ENCODE measurements at regions of chr2 and their contacts with region 1.

Region 1: DNA sequence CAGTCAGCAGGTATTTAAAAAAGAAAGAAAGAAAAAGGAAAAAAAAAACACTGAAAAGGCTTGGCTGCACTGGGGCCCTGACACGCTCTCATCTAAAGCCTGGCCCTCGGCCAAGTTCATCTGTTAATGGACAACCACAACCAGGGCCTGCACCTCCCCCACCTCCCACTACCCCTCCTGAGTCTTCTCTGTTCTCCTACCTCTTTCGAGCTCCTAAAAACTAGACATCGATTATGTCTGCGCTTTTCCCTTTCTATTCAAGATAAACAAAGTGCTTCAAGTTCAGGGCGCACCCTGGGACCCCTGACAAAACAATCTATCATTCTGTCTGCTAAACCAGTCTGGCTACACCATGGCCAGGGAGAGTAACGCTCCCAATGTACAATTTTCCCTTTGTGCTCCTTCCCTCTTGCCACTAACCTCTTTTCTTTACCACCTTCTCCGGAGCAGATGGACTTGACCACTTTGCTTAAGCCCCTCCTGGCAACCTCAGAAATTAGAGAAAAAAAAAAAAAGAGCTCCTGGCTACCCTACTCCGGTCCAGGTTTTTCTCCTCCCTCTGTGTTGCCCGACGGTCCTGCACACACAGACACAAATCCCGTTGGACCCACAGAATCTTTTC is 22.7 kb downstream of the BCL11A start:
- DNase-seq: peak; percentile 69 to 84 (median 84)
- H3K4me3 ChIP-seq: peak overlapping the region in 5 of 7 experiments; percentile 15 to 69 (median 33)
- H3K27ac ChIP-seq: peak overlapping the region in 1 of 2 experiments; percentile 56
- H3K4me1 ChIP-seq: peaks cover 30 to 96% (median 78%) of the 10 kb centered on the region in 4 experiments
- H3K27me3 ChIP-seq: no peaks in the 10 kb centered on the region

Region 2: DNA sequence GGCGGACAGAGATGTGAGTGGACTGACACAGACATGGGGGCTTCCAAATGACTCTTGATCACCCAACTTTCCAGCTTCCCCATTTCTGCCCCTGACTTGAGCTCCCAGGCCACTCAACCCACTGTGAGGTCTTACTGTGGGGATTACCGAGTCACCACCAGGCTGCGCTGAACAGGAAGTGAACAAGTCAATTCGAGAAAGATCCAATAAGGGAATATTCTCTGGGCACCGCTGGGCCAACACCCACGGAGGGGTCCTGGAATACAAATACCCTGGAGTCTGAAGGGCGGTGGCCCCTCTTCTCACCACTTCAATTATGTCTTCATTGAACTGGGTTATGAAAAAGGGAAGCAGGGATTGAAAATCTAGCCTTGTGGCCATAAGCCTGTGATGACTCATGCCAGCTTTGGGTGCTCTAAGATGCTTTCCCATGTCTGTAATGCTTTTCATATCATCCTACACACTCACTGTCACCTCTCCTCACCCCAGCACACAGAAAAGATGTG is 15.0 kb before region 1 on chr2:
- CTCF ChIA-PET with region 1: interaction called, 35 read pairs
- POLR2A ChIA-PET with region 1: interaction called, 4 read pairs
- DNase-seq: peak; percentile 70 to 94 (median 92)
- H3K4me3 ChIP-seq: no peak overlapping the region
- H3K27ac ChIP-seq: peak overlapping the region in 1 of 2 experiments; percentile 41
- H3K4me1 ChIP-seq: peaks cover 12 to 56% (median 39%) of the 10 kb centered on the region in 4 experiments
- H3K27me3 ChIP-seq: no peaks in the 10 kb centered on the region

Measured in common myeloid progenitor, CD34-positive (primary cell).